AG04450 (cell line): ENCODE measurements at regions of chr19 and their contacts with region 1.

Region 1: DNA sequence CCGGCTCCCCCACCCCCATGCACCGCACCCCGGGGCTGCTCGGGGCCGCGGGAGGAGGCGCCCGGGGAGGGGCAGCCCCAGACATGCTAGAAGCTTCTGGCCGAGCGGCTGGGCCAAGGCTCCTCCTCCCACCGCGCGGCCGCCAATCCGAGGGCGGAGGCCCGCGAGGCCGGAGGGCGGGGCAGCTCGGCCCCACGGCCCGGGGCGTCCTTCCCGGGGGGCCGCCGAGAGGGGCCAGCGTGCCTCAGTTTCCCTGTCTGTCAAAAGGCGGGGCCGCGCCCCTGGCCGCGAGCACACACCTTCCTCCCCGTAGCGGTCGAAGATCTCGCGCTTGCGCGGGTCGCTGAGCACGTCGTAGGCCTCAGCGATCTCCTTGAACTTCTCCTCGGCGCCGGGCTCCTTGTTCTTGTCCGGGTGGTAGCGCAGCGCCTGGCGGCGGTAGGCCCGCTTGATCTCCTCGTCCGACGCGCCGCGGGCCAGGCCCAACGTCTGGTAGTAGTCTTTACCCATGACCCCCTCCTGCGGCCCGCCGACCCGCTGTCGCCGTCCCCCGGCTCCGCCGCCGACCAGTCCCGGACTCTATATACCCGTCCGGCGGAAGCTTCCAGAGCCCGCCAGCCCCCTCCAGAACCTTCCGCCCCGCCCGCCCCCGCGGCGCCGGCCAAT is at the start of gene DNAJB1:
- DNase-seq: no peak
- H3K4me3 ChIP-seq: peak within 1 kb of the TSS; percentile 94
- H3K27ac ChIP-seq: peak within 1 kb of the TSS; percentile 94
- H3K27me3 ChIP-seq: no peaks in the 10 kb centered on the region
- CTCF ChIP-seq: no peak
- polyA plus RNA-seq, gene DNAJB1: 80.6 and 88.3 TPM in 2 replicates

Region 2: GRCh38 chr19:14366498-14366915 is 151.5 kb before region 1 on chr19:
- CTCF ChIA-PET with region 1: no interaction called
- POLR2A ChIA-PET with region 1: no interaction called
- DNase-seq: no peak
- H3K4me3 ChIP-seq: no peak overlapping the region
- H3K27ac ChIP-seq: no peak overlapping the region
- H3K27me3 ChIP-seq: no peaks in the 10 kb centered on the region
- CTCF ChIP-seq: no peak

Region 3: GRCh38 chr19:14450168-14450874 is 67.7 kb before region 1 on chr19:
- CTCF ChIA-PET with region 1: no interaction called
- POLR2A ChIA-PET with region 1: no interaction called
- DNase-seq: no peak
- H3K4me3 ChIP-seq: no peak overlapping the region
- H3K27ac ChIP-seq: no peak overlapping the region
- H3K27me3 ChIP-seq: no peaks in the 10 kb centered on the region
- CTCF ChIP-seq: no peak

Region 4: DNA sequence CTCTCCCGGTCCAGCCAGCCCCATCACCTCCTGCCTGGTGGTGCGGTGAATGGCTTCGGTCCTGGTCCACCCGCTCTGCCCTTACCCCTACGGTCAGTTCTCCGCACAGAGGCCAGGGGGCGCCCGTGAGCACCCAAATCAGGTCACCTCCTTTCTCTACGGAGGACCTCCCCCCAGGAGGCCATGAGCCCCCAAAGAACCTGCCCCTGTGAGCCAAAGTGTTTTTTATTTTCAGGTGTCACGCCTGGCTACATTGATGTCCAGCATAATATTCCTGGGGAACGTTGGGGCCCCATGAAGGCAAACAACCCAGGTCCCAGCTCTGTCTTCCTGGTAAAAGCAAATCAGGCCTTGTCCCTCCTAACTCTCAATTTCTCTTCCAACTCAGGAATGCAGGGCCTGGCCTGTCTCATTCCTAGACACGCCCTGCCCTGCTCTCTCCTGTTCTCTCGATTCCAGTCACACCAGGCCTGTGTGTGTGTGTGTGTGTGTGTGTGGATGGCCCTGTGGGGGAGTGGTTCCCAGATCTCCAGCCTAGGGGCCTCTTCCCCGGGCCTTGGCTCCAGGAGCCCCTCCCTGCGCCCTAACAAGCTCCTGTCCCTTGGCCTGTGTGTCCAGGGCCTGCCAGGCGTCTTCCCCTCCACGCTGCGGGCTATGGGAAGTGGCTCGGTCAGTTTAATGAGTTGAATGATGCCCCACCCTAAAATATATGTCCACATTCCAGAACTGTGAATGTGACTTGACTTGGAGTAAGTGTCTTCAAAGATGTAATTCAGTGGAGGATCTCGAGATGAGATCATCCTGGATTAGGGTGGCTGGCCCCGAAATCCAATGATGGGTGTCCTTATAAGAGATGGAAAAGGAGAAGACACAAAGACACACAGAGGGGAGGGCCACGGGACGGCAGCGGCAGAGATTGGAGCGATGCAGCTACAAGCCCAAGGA is 12.2 kb before region 1 on chr19:
- CTCF ChIA-PET with region 1: interaction called, 6 read pairs
- POLR2A ChIA-PET with region 1: interaction called, 10 read pairs
- DNase-seq: no peak
- H3K4me3 ChIP-seq: no peak overlapping the region
- H3K27ac ChIP-seq: peak overlapping the region; percentile 78
- H3K27me3 ChIP-seq: no peaks in the 10 kb centered on the region
- CTCF ChIP-seq: peak; percentile 68